ENCODE measurements at regions of chr3 and their contacts with region 1.

Region 1: GRCh38 chr3:65732051-65732935 is 306.4 kb downstream of the MAGI1 start:
- DNase-seq: peak; percentile 84
- H3K4me3 ChIP-seq: 0 out of 2 replicates have a peak overlapping the region, but pooled peaks have one; percentile 15
- H3K27ac ChIP-seq: no peak overlapping the region
- H3K4me1 ChIP-seq: peaks cover 19% of the 10 kb centered on the region
- H3K27me3 ChIP-seq: no peaks in the 10 kb centered on the region

Region 2: DNA sequence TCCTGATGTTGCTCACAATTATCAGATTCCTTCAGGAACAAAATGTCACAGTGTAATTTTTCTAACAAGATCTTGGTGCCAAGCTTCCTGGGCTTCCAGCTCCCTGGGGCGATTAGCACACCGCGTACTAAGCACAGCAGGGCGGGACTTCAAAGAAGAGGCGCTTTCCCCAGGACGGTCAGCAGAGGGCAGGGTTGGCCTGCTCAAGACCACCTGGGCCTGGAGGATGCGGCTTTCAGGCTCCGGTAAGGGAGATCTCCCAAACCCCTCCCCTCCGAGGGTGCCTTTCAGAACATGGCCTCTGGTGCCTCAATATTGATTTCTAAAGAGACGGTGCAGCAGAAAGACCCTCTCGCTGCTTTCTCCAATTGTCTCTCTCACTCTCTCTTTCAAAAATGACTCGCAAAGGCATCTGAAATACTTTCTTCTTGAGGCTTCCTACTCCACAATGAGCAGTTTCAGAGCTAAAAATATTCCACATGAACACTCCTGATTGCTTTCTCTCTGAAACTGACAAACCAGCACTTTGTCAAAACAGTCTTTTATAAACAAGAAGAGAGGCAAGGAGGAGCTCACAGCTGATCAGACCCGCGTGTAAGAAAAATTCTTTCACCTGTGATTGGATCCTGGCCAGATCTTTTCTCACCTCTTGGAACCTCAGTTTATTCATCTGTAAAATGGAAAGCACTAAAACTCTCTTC is 1198.5 kb before region 1 on chr3:
- in situ Hi-C with region 1: loop called (anchors 25 kb)
- DNase-seq: peak; percentile 90
- H3K4me3 ChIP-seq: peak overlapping the region; percentile 13; the same call in 1 of the 2 replicates
- H3K27ac ChIP-seq: no peak overlapping the region
- H3K4me1 ChIP-seq: no peaks in the 10 kb centered on the region; the same call in 1 of the 2 replicates
- H3K27me3 ChIP-seq: no peaks in the 10 kb centered on the region

Region 3: GRCh38 chr3:65413891-65414290 is 318.4 kb before region 1 on chr3:
- in situ Hi-C with region 1: no loop called
- DNase-seq: no peak
- H3K4me3 ChIP-seq: no peak overlapping the region
- H3K27ac ChIP-seq: no peak overlapping the region
- H3K4me1 ChIP-seq: no peaks in the 10 kb centered on the region
- H3K27me3 ChIP-seq: no peaks in the 10 kb centered on the region

Region 4: DNA sequence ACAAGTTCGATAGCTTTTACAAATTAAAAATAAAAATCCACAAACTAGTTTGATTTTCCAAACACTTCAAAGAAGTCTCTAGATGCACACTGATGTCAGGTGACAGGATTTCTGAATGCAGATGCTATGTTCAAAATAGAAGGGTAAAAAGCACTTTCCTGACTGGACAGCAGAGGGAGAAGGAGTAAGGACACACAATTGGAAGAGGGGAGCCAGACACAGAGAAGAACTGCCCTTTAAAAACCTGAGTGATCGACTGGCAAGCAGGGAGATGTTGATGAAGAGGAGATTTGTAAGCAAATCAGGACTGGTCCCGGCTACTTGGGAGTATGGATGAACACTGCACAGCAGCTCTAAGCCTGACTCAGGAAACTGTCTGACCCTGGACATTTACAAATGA is 306.4 kb before region 1 on chr3:
- in situ Hi-C with region 1: loop called (anchors 10 kb)
- DNase-seq: peak; percentile 22
- H3K4me3 ChIP-seq: no peak overlapping the region
- H3K27ac ChIP-seq: no peak overlapping the region
- H3K4me1 ChIP-seq: no peaks in the 10 kb centered on the region
- H3K27me3 ChIP-seq: no peaks in the 10 kb centered on the region

Measured in GM23248 (cell line).